Activated T-helper 1 cell treated with anti-CD3 and anti-CD28 coated beads, Interleukin-12 subunit alpha, Interleukin-12 subunit beta, Interleukin-2, Interleukin-4 antibody, amounts not matched to agents 30 ng/mL and 10 ng/mL and 1 ng/mL, durations not matched to agents 14 hours and 24 hours and 36 hours (primary cell): ENCODE measurements at regions of chr11 and their contacts with region 1.

Region 1: GRCh38 chr11:62753736-62754603 is at the start of gene ZBTB3:
- DNase-seq: peak; percentile 95
- H3K4me3 Mint-ChIP-seq: peak within 1 kb of the TSS; percentile 89
- H3K27ac Mint-ChIP-seq: peak within 1 kb of the TSS; percentile 91
- H3K4me1 Mint-ChIP-seq: peaks cover 12% of the 10 kb centered on the region
- H3K27me3 Mint-ChIP-seq: no peaks in the 10 kb centered on the region
- total RNA-seq, gene ZBTB3: 8.7 and 9.1 TPM in 2 replicates

Region 2: DNA sequence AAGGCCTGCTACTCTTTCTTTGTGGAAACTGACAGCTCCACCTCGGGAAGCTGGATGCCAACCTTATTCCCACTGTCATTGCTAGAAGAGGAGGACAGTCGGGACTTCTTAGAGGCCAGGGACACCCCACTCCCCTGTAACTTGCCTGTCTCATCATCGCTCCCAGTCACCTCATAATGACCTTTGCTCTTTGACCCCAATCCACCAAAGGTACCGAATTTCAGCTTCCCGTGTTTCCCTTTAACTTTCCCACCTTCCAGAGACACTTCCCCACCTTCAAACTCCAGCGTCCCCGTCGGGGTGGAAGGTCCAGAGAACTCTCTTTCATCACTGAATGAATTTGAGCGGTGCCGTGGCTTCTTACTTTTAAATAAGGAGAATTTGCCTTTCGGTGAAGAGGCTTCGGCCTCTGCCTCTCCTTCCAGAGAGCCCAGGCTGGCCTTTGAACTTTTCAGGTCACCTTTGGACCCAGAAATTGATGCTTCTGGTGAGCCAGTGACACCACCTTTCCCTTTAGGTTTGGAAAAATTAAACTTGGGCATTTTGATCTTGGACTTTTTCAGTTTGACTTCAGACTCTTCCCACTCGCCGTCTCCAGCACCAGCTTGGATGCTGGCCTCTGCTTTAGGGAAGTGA is 237.1 kb before region 1 on chr11:
- intact Hi-C with region 1: no loop called
- DNase-seq: no peak
- H3K4me3 Mint-ChIP-seq: no peak overlapping the region
- H3K27ac Mint-ChIP-seq: no peak overlapping the region
- H3K4me1 Mint-ChIP-seq: no peaks in the 10 kb centered on the region
- H3K27me3 Mint-ChIP-seq: no peaks in the 10 kb centered on the region

Region 3: GRCh38 chr11:62612366-62613290 is 141.3 kb before region 1 on chr11 and contains the starts of genes EML3 and ROM1:
- intact Hi-C with region 1: loop called (anchors 5 kb)
- DNase-seq: peak; percentile 85
- H3K4me3 Mint-ChIP-seq: peak within 1 kb of the TSS; percentile 96
- H3K27ac Mint-ChIP-seq: peak within 1 kb of the TSS; percentile 97
- H3K4me1 Mint-ChIP-seq: peaks cover 32% of the 10 kb centered on the region
- H3K27me3 Mint-ChIP-seq: no peaks in the 10 kb centered on the region
- total RNA-seq, gene EML3: 164 and 167 TPM in 2 replicates
- total RNA-seq, gene ROM1: 2.5 and 3.2 TPM in 2 replicates

Region 4: DNA sequence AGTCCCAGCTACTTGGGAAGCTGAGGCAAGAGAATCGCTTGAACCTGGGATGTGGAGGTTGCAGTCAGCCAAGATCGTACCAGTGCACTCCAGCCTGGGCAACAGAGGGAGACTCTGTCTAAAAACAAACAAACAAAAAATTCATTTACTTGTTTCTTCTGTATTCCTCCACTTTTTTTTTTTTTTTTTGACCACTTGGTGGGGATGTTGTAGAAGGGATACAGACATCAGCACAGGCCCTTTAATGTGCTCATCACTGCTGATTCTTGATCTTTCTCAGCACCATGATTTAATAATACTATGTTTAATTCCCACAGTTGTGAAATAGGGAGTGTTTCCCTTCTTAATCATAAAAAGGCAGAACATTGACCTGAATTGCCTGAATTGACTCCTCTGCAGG is 21.2 kb before region 1 on chr11:
- intact Hi-C with region 1: loop called (anchors 1 kb)
- DNase-seq: no peak
- H3K4me3 Mint-ChIP-seq: no peak overlapping the region
- H3K27ac Mint-ChIP-seq: peak overlapping the region; percentile 40
- H3K4me1 Mint-ChIP-seq: peaks cover 15% of the 10 kb centered on the region
- H3K27me3 Mint-ChIP-seq: no peaks in the 10 kb centered on the region

Region 5: DNA sequence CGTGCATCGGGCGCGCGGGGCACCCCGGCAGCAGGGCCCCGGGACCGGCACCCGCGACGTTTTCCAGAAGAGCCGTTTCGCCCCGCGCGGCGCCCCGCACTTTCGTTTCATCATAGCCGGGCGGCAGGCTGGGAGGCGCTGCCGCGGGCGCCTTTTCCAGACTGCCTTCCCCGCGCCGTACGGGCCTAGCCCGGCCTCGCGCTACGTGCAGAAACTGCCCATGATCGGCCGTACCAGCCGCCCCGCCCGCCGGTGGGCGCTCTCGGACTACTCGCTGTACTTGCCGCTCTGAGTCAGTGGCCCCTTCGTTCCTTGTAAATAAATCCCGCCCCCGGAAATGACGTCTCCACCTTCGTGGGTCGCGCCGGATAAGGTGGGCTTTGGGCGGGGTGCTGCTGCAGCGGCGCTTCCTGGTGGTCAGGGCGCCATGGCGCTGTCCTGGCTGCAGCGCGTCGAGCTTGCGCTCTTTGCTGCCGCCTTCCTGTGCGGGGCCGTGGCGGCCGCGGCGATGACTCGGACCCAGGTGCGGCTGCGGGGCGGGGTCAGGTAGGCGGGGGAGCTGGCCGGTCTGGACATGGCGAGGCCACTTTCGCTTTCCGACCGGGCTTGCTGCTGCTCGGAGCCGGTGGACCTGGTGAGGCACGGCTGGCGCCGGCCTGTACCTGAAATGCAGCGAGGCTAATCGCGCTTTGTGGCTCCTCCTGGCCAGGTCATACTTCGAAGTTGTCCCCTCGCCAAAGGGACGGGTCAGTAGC is 33.2 kb after region 1 on chr11 and contains the start of gene TMEM179B:
- intact Hi-C with region 1: loop called (anchors 1 kb)
- DNase-seq: peak; percentile 96
- H3K4me3 Mint-ChIP-seq: peak within 1 kb of the TSS; percentile 95
- H3K27ac Mint-ChIP-seq: peak within 1 kb of the TSS; percentile 94
- H3K4me1 Mint-ChIP-seq: peaks cover 42% of the 10 kb centered on the region
- H3K27me3 Mint-ChIP-seq: no peaks in the 10 kb centered on the region
- total RNA-seq, gene TMEM179B: 40.6 and 43.0 TPM in 2 replicates